ENCODE measurements at regions of chr6 and their contacts with region 1.

Region 1: GRCh38 chr6:28136585-28137504 is 4.8 kb upstream of the ZKSCAN8 start:
- DNase-seq: peak; percentile 92
- H3K4me3 ChIP-seq: peak overlapping the region; percentile 59 to 87 (median 72)
- H3K27ac ChIP-seq: peak overlapping the region; percentile 88 to 98 (median 96)
- H3K4me1 ChIP-seq: peaks cover 28 to 82% (median 58%) of the 10 kb centered on the region in 6 donors
- H3K27me3 ChIP-seq: no peaks in the 10 kb centered on the region
- CTCF ChIP-seq: no peak
- POLR2A ChIP-seq: peak in 1 of 3 donors; percentile 23

Region 2: GRCh38 chr6:27728442-27728841 is 408.4 kb before region 1 on chr6:
- intact Hi-C with region 1: no loop called
- DNase-seq: no peak
- H3K4me3 ChIP-seq: no peak overlapping the region
- H3K27ac ChIP-seq: no peak overlapping the region
- H3K4me1 ChIP-seq: no peaks in the 10 kb centered on the region
- H3K27me3 ChIP-seq: peaks cover 0 to 60% (median 0%) of the 10 kb centered on the region in 7 donors
- CTCF ChIP-seq: no peak
- POLR2A ChIP-seq: no peak

Region 3: DNA sequence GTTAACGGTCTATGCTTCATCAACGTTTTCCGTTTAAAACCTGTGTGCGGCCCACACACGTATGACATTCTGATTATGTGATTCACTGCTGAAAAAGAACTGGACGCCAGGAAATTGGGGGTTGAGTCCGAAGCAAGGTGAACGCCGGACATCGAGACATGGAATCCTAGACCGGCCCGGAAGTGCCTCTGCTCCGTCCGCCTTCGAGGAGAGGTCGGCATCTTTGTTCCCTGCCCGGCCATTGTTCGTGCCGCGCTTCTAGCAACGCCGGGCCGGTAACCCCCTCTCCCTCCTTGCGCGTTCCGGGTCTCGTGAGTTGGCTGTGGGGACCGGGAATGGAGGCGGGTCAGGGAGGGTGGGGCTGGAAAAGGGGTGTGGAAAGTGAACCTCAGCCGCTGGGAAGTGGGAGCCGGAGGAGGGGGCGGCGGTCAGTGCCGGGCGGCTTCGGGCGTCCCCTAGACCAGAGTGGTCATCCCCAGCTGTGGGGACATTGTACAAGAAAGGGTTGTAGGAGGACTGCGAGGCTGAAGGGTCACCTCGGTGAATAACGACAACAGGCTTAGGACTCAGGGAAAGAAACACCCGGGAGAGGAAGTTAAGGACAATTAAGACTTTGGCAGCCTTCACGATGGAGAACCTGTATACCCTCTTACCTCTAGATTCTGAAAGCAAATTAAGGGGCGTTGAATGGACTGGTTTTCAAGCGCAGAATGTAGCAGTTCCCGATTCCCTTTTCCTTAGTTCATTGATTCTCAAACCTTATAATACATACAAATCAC is 88.4 kb after region 1 on chr6 and contains the start of gene ZSCAN9:
- intact Hi-C with region 1: loop called (anchors 10 kb)
- DNase-seq: peak; percentile 93
- H3K4me3 ChIP-seq: peak within 1 kb of the TSS; percentile 58 to 85 (median 70)
- H3K27ac ChIP-seq: peak within 1 kb of the TSS; percentile 52 to 86 (median 76)
- H3K4me1 ChIP-seq: peaks cover 4 to 45% (median 22%) of the 10 kb centered on the region in 6 donors
- H3K27me3 ChIP-seq: peaks cover 0 to 17% (median 5%) of the 10 kb centered on the region in 7 donors
- CTCF ChIP-seq: no peak
- POLR2A ChIP-seq: no peak
- total RNA-seq, gene ZSCAN9: 11.2 to 25.7 (median 15.4) TPM

Region 4: GRCh38 chr6:28355743-28356665 is 219.2 kb after region 1 on chr6:
- intact Hi-C with region 1: loop called (anchors 10 kb)
- DNase-seq: peak; percentile 87
- H3K4me3 ChIP-seq: peak overlapping the region; percentile 46 to 76 (median 56)
- H3K27ac ChIP-seq: peak overlapping the region; percentile 79 to 92 (median 86)
- H3K4me1 ChIP-seq: peaks cover 15 to 51% (median 27%) of the 10 kb centered on the region in 6 donors
- H3K27me3 ChIP-seq: no peaks in the 10 kb centered on the region
- CTCF ChIP-seq: peak; percentile 59 to 97 (median 85)
- POLR2A ChIP-seq: no peak

Region 5: DNA sequence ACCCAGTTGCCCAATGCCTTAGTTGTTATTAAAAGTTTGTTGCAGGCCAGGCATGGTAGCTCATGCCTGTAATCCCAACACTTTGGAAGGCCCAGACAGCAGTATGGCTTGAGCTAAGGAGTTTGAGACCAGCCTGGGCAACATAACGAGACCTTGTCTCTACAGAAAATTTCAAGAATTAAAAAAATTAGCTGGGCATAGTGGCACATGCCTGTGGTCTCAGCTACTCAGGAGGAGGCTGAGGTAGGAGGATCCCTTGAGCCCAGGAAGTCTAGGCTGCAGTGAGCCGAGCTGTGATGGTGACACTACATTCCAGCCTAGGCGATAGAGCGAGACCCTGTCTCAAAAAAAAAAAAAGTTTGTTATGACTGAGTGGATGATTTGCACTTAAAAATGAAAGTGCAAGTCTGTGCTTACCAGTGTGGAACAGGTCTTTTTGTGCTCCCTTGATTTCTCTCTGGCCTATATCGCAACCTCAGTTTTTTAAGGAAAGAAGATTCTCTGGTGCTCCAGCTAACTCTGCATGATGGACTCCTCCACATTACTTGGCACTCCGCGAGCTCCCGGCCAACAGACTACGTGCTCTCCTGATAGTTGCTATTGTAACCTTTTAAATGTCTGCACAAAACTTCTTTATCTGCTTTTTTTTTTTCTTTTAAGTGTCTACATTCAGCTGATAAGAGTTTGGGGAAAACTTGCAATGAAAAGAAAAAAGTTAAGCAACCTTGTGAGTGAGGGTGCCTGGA is 235.0 kb after region 1 on chr6:
- intact Hi-C with region 1: no loop called
- DNase-seq: no peak
- H3K4me3 ChIP-seq: no peak overlapping the region
- H3K27ac ChIP-seq: peak overlapping the region in 1 of 8 donors; percentile 8
- H3K4me1 ChIP-seq: peaks cover 0 to 11% (median 2%) of the 10 kb centered on the region in 6 donors
- H3K27me3 ChIP-seq: no peaks in the 10 kb centered on the region
- CTCF ChIP-seq: no peak
- POLR2A ChIP-seq: no peak